ENCODE measurements at regions of chr4 and their contacts with region 1.

Region 1: DNA sequence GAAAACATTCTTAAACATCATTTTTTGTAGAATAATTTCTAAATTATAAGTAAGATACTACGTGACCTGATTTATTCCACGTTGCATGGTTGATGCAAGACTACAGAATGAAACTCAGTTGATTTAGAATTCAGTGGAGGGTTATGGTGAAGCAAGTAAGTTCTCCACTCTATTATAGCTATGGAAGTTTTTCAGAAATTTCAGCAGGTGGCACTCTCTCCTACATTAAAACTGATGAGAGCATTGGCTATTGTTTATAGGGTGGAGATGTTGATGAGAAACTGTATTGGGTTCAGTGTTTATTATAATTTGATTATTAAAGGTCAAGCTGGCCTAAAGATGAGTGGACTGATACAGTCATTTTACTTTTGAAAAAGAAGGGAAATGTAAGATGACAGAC is 88.0 kb downstream of the FNIP2 start:
- DNase-seq: no peak
- ATAC-seq: peak; percentile 90
- H3K4me3 ChIP-seq: no peak overlapping the region
- H3K27ac ChIP-seq: no peak overlapping the region
- H3K4me1 ChIP-seq: no peaks in the 10 kb centered on the region
- H3K27me3 ChIP-seq: no peaks in the 10 kb centered on the region
- CTCF ChIP-seq: peak; percentile 55; the same call in 1 of the 2 replicates

Region 2: DNA sequence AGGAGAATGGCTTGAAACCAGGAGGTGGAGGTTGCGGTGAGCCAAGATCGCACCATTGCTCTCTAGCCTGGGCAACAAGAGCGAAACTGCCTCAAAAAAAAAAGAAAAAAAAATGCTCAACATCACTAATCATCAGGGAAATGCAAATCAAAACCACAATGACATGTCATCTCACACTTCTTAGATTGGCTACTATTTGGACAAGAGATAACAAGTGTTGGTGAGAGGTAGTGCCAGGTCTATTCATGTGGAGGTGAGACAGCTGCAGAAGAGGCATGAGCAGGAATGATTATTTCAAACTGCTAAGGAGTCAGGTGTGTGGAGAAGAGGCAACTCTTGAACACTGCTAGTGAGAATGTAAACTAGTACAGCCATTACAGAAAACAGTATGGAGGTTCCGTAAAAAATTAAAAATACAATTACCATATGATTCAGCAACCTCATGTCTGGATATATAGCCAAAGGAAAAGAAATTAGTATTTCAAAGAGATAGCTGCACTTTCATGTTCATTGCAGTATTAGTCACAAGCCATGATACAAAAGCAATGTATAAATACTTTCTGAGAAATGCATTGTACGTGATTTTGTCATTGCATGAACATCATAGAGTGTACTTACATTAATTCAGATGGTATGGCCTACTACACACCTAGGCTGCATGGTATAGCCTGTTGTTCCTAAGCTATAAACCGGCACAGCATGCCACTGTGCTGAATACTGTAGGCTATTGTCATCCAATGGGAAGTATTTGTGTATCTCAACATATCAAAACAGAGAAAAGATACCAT is 571.2 kb before region 1 on chr4:
- CTCF ChIA-PET with region 1: no interaction called
- POLR2A ChIA-PET with region 1: no interaction called
- in situ Hi-C with region 1: no loop called
- intact Hi-C with region 1: no loop called
- DNase-seq: no peak
- ATAC-seq: no peak
- H3K4me3 ChIP-seq: no peak overlapping the region
- H3K27ac ChIP-seq: no peak overlapping the region
- H3K4me1 ChIP-seq: no peaks in the 10 kb centered on the region
- H3K27me3 ChIP-seq: no peaks in the 10 kb centered on the region
- CTCF ChIP-seq: no peak

Region 3: DNA sequence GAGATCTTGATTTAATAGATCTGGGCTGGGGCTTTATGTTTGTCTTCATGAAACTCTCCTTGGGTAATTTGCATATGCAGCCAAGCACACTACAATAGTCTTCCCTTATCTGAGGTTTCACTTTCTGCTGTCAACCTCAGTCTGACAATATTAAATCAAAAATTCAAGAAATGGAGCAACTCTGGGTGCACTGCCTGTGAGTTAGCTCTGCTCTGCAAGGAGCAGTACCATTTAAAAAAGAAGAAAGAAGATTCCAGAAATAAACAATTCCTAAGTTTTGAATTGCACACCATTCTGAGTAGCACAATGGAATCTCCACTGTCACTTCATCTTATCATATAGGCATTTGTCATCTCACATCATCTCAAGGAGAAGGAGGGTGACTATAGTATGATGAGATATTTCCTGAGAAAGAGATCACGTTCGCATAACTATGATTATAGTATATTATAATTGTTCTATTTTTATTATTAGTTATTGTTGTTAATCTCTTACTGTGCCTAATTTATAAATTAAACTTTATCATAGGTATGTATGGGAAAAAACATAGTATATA is 78.6 kb before region 1 on chr4:
- CTCF ChIA-PET with region 1: no interaction called
- POLR2A ChIA-PET with region 1: interaction called, 3 read pairs
- in situ Hi-C with region 1: no loop called
- intact Hi-C with region 1: loop called (anchors 10 kb)
- DNase-seq: no peak
- ATAC-seq: no peak
- H3K4me3 ChIP-seq: no peak overlapping the region
- H3K27ac ChIP-seq: peak overlapping the region; percentile 57
- H3K4me1 ChIP-seq: peaks cover 51% of the 10 kb centered on the region
- H3K27me3 ChIP-seq: no peaks in the 10 kb centered on the region
- CTCF ChIP-seq: no peak

Region 4: DNA sequence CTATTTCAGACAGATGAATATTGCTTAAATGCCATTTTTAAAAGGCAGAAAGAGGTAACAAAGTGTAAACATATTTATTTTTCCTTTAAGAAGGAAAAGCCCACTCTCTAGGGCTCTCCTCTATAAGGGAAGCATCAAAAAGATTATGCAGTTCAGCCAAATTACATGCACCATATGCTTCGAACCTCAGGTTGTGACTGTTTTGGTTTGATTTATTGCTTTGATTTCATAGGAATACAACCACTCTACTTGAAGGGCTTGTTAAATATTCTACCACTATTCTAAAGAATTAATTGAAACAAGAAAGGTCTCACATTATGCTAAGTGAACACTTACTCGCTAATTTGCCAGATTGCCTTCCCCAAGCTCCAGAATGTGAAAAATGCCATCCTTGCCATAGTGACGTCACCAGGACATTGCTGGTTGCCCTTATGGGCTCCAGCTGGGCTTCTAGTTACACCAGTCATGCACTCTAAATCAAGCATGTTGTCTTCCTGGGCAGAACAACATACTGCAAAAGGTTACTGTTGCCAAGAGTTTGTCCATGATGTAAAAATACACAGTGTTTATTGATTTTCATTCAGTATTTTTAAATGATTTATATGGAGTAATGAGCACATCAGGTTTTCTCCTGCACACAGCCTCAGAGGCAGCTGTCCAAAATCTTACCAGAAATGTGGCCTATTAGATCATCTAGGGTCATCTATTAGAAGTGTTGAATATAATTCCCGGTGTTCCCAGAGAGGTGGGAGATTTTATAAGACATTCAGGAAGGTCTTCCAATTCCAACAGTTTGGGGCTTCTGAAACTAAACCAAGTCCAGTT is 81.6 kb after region 1 on chr4:
- CTCF ChIA-PET with region 1: no interaction called
- POLR2A ChIA-PET with region 1: no interaction called
- in situ Hi-C with region 1: no loop called
- intact Hi-C with region 1: no loop called
- DNase-seq: no peak
- ATAC-seq: no peak
- H3K4me3 ChIP-seq: no peak overlapping the region
- H3K27ac ChIP-seq: no peak overlapping the region
- H3K4me1 ChIP-seq: no peaks in the 10 kb centered on the region
- H3K27me3 ChIP-seq: no peaks in the 10 kb centered on the region
- CTCF ChIP-seq: no peak

Region 5: DNA sequence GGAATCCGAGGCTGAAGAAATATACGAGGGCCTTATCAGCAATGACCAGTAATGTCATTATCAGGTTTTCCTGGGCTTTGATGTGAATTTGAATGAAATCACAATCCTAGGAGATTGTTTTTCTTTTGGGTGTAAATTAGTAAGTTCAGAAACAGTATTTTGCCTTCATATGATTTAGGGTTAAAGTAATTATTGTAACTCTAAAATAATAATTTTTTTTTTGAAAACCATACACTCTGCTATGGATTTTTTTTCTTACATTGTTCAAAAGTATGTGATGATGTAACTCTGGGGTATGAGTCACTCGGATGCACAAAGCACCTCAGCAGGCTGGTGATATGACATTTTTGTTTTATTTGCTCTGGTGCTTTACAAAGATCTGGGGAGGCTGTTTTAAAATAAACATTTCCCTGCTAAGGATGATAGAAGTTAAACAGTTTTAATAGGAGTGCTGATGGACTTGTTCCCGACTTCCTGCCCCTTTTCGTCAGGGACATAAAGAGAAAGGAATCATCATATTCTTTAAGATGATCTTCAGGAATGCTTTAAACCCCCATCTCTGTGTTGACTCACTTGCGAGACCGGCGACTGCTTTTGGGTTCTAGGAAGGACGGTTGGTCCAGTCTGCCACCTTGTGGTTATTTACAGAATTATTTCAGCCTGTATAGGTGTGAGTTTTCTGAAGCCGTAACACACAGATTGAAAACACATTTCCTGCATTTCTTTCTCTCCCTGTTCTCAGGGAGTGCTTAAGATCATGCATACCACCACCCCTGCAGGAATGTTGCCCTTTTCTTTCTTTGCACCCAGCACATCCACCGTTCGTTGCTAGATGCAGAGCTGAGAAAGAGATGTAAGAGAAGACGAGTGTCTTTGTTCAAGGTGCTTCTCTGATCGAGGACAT is 318.5 kb after region 1 on chr4:
- CTCF ChIA-PET with region 1: no interaction called
- POLR2A ChIA-PET with region 1: no interaction called
- in situ Hi-C with region 1: no loop called
- intact Hi-C with region 1: loop called (anchors 2 kb)
- DNase-seq: peak; percentile 74
- ATAC-seq: peak; percentile 99
- H3K4me3 ChIP-seq: peak overlapping the region in 1 of 2 experiments; percentile 19; a peak in 2 of 4 replicates
- H3K27ac ChIP-seq: peak overlapping the region; percentile 57; the same call in 1 of the 2 replicates
- H3K4me1 ChIP-seq: peaks cover 3% of the 10 kb centered on the region; the same call in 1 of the 2 replicates
- H3K27me3 ChIP-seq: no peaks in the 10 kb centered on the region
- CTCF ChIP-seq: peak; percentile 81

Region 6: DNA sequence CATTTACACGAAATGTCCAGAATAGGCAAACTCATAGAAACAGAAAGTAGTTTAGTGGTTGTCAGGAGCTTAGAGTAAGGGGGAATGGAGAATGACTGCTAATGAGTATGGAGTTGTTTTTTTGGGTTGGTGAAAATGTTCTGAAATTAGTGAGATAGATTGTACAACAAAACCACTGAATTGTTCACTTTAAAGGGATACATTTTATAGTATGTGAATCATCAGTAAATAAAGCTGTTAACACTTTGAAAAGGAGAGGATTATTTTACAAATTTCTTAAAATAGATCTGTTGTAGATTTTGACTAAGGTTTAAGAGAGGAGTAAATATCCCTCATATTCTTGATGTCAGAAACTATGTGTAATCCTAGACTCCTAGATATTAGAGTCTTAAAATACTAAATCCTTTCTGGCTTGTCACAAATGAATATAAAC is 328.8 kb after region 1 on chr4:
- CTCF ChIA-PET with region 1: no interaction called
- POLR2A ChIA-PET with region 1: no interaction called
- in situ Hi-C with region 1: no loop called
- intact Hi-C with region 1: no loop called
- DNase-seq: no peak
- ATAC-seq: no peak
- H3K4me3 ChIP-seq: no peak overlapping the region
- H3K27ac ChIP-seq: no peak overlapping the region
- H3K4me1 ChIP-seq: no peaks in the 10 kb centered on the region
- H3K27me3 ChIP-seq: no peaks in the 10 kb centered on the region
- CTCF ChIP-seq: no peak

Region 7: GRCh38 chr4:159201168-159201567 is 344.3 kb after region 1 on chr4:
- CTCF ChIA-PET with region 1: interaction called, 3 read pairs
- POLR2A ChIA-PET with region 1: no interaction called
- in situ Hi-C with region 1: no loop called
- intact Hi-C with region 1: loop called (anchors 5 kb)
- DNase-seq: no peak
- ATAC-seq: no peak
- H3K4me3 ChIP-seq: no peak overlapping the region
- H3K27ac ChIP-seq: no peak overlapping the region
- H3K4me1 ChIP-seq: no peaks in the 10 kb centered on the region
- H3K27me3 ChIP-seq: no peaks in the 10 kb centered on the region
- CTCF ChIP-seq: no peak

Measured in Panc1 (cell line).